ENCODE measurements at regions of chr14 and their contacts with region 1.

Region 1: GRCh38 chr14:51219473-51220448 is 20.3 kb upstream of the TMX1 start:
- DNase-seq: no peak
- ATAC-seq: peak in 1 of 4 donors; percentile 56
- H3K4me3 ChIP-seq: no peak overlapping the region
- H3K27ac ChIP-seq: no peak overlapping the region
- H3K4me1 ChIP-seq: no peaks in the 10 kb centered on the region
- H3K27me3 ChIP-seq: no peaks in the 10 kb centered on the region
- CTCF ChIP-seq: peak; percentile 64

Region 2: DNA sequence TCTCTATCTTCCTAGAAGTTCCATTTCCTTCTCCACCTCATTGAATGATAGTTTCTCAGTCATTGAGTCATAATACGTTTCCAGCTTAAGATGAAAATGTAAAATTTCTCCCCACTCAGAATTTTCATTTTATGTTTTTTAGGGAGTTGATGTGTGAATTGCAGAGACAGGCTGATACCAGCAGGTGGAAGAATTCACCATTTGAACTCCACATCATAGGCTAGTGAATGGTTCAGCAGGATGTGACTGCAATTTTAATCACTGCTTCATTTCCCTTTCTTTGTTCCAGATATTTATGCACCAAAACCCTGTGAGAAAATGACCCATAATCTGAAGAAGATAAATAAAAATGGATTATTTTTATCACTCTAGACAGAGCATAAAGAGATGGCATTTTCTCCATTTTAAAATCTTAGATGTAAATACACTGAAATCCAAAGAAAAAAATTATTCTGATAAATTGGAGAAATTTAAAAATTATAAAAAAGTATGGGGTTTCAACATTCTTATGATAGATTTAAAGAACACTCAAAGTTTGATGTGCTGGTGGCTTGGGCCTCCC is 264.9 kb before region 1 on chr14:
- intact Hi-C with region 1: loop called (anchors 2 to 5 kb)
- DNase-seq: no peak
- ATAC-seq: peak; percentile 69 to 93 (median 82)
- H3K4me3 ChIP-seq: no peak overlapping the region
- H3K27ac ChIP-seq: peak overlapping the region; percentile 62
- H3K4me1 ChIP-seq: peaks cover 8% of the 10 kb centered on the region
- H3K27me3 ChIP-seq: no peaks in the 10 kb centered on the region
- CTCF ChIP-seq: peak; percentile 74